HEK293 (cell line): ENCODE measurements at regions of chr2 and their contacts with region 1.

Region 1: DNA sequence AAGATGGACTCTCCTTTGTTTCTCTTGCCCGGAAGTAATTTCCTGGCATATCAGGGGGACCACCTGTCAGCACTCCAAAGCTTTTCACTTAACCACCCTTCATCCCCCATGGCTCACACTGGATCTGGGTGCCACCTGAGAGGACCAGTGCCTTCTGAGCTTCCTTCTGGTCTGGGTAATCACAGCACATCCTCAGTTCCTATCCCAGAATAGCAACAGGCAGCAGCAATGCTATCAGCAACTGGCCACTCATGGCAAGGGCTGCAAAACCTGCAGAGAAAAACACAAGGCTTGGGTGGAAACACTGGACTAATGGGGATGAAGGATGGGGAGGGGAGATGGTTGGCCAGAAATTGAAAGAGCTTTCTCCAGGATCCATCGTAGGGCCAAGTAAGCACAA is 59.9 kb upstream of the STPG4 start:
- H3K4me3 ChIP-seq: no peak overlapping the region
- H3K27ac ChIP-seq: no peak overlapping the region
- H3K4me1 ChIP-seq: peaks cover 8% of the 10 kb centered on the region
- CTCF ChIP-seq: no peak

Region 2: GRCh38 chr2:47034973-47035609 is 179.9 kb before region 1 on chr2:
- CTCF ChIA-PET with region 1: no interaction called
- POLR2A ChIA-PET with region 1: no interaction called
- H3K4me3 ChIP-seq: no peak overlapping the region
- H3K27ac ChIP-seq: peak overlapping the region; percentile 51; the same call in 1 of the 2 replicates
- H3K4me1 ChIP-seq: peaks cover 20% of the 10 kb centered on the region
- CTCF ChIP-seq: no peak

Region 3: GRCh38 chr2:47225061-47225859 is 10.3 kb after region 1 on chr2:
- CTCF ChIA-PET with region 1: interaction called, 10 read pairs
- POLR2A ChIA-PET with region 1: no interaction called
- H3K4me3 ChIP-seq: no peak overlapping the region
- H3K27ac ChIP-seq: peak overlapping the region; percentile 71
- H3K4me1 ChIP-seq: peaks cover 31% of the 10 kb centered on the region
- CTCF ChIP-seq: no peak